ENCODE measurements at regions of chr16 and their contacts with region 1.

Region 1: DNA sequence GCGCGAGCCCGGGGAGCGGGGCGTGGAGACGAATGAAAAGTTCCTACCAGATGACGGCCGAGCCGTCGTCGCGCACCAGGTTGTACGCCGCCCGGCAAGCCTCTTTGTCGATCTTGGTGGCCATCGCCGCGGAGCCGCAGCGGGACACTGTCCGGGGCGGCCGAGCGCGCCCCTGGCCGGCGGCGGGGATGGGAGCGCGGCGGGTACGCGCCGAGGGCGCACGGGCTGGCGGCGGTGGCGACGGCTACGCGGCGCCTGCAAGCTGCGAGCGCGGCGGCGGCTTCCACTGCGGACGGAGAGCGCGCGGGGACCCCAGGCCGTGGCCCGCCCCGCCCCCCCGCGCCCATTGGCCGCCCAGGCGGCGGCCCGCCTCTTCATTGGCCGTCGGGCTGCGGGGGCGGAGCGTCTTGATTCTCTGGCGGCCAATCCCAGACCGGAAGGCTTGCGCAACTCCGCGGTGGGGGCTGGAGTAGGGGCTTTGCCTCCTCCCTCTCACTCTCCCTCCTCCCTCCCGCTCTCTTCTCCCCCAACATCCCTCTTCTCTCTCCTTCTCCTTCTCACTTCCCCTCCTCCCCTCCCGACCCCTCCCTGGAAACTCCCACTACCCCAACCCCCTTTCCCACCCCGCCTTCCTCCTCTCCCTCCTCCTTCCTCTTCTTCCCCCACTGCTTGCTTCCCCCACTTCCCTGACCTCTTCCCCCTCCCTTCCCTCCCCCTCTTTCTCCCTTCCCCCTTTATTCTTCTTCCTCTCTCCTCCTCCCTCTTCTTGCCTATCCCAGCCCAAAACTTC is at the start of gene COTL1:
- DNase-seq: peak; percentile 84 to 96 (median 91)
- ATAC-seq: peak; percentile 87 to 90 (median 88)
- H3K4me3 ChIP-seq: peak within 1 kb of the TSS; percentile 89 to 91
- H3K4me3 Mint-ChIP-seq: peak within 1 kb of the TSS; percentile 94 to 98 (median 95)
- H3K27ac ChIP-seq: no peak within 1 kb of the TSS
- H3K27ac Mint-ChIP-seq: peak within 1 kb of the TSS; percentile 81 to 86
- H3K4me1 ChIP-seq: peaks cover 28 to 47% of the 10 kb centered on the region in 2 experiments
- H3K4me1 Mint-ChIP-seq: peaks cover 48 to 54% (median 51%) of the 10 kb centered on the region in 3 donors
- H3K27me3 ChIP-seq: no peaks in the 10 kb centered on the region
- H3K27me3 Mint-ChIP-seq: no peaks in the 10 kb centered on the region
- total RNA-seq, gene COTL1: 205 to 265 (median 221) TPM

Region 2: GRCh38 chr16:84511180-84511824 is 106.7 kb before region 1 on chr16:
- CTCF ChIA-PET with region 1: interaction called, 17 to 27 read pairs
- POLR2A ChIA-PET with region 1: interaction called, 7 to 8 read pairs
- DNase-seq: peak; percentile 48 to 93 (median 81)
- ATAC-seq: peak; percentile 14 to 22 (median 19)
- H3K4me3 ChIP-seq: no peak overlapping the region
- H3K4me3 Mint-ChIP-seq: no peak overlapping the region
- H3K27ac ChIP-seq: no peak overlapping the region
- H3K27ac Mint-ChIP-seq: peak overlapping the region; percentile 78 to 89
- H3K4me1 ChIP-seq: peaks cover 49 to 86% of the 10 kb centered on the region in 2 experiments
- H3K4me1 Mint-ChIP-seq: peaks cover 65 to 72% (median 70%) of the 10 kb centered on the region in 3 donors
- H3K27me3 ChIP-seq: no peaks in the 10 kb centered on the region
- H3K27me3 Mint-ChIP-seq: no peaks in the 10 kb centered on the region

Region 3: GRCh38 chr16:84517366-84517765 is 100.6 kb before region 1 on chr16:
- CTCF ChIA-PET with region 1: interaction called, 7 to 17 read pairs
- POLR2A ChIA-PET with region 1: interaction called, 7 to 8 read pairs
- DNase-seq: no peak
- ATAC-seq: no peak
- H3K4me3 ChIP-seq: no peak overlapping the region
- H3K4me3 Mint-ChIP-seq: no peak overlapping the region
- H3K27ac ChIP-seq: no peak overlapping the region
- H3K27ac Mint-ChIP-seq: peak overlapping the region; percentile 69 to 91
- H3K4me1 ChIP-seq: peaks cover 51 to 74% of the 10 kb centered on the region in 2 experiments
- H3K4me1 Mint-ChIP-seq: peaks cover 67 to 71% (median 67%) of the 10 kb centered on the region in 3 donors
- H3K27me3 ChIP-seq: no peaks in the 10 kb centered on the region
- H3K27me3 Mint-ChIP-seq: no peaks in the 10 kb centered on the region

Region 4: GRCh38 chr16:84599521-84600202 is 18.3 kb before region 1 on chr16:
- CTCF ChIA-PET with region 1: interaction called, 4 to 17 read pairs
- POLR2A ChIA-PET with region 1: interaction called in 1 of 2 experiments, 4 read pairs
- DNase-seq: peak in 18 of 35 experiments; percentile 29 to 65 (median 40)
- ATAC-seq: peak; percentile 14 to 43 (median 36)
- H3K4me3 ChIP-seq: peak overlapping the region; percentile 48 to 66
- H3K4me3 Mint-ChIP-seq: peak overlapping the region; percentile 82 to 85 (median 84)
- H3K27ac ChIP-seq: peak overlapping the region; percentile 93
- H3K27ac Mint-ChIP-seq: peak overlapping the region; percentile 99
- H3K4me1 ChIP-seq: peaks cover 72 to 98% of the 10 kb centered on the region in 2 experiments
- H3K4me1 Mint-ChIP-seq: peaks cover 88 to 93% (median 90%) of the 10 kb centered on the region in 3 donors
- H3K27me3 ChIP-seq: peaks cover 0 to 7% of the 10 kb centered on the region in 2 experiments
- H3K27me3 Mint-ChIP-seq: no peaks in the 10 kb centered on the region

Region 5: GRCh38 chr16:84726079-84726668 is 108.2 kb after region 1 on chr16:
- CTCF ChIA-PET with region 1: interaction called, 5 to 34 read pairs
- POLR2A ChIA-PET with region 1: no interaction called
- DNase-seq: peak; percentile 57 to 90 (median 78)
- ATAC-seq: peak; percentile 68 to 81 (median 76)
- H3K4me3 ChIP-seq: no peak overlapping the region
- H3K4me3 Mint-ChIP-seq: peak overlapping the region; percentile 34 to 49 (median 48)
- H3K27ac ChIP-seq: no peak overlapping the region
- H3K27ac Mint-ChIP-seq: no peak overlapping the region
- H3K4me1 ChIP-seq: peaks cover 14 to 17% of the 10 kb centered on the region in 2 experiments
- H3K4me1 Mint-ChIP-seq: peaks cover 79 to 82% (median 81%) of the 10 kb centered on the region in 3 donors
- H3K27me3 ChIP-seq: no peaks in the 10 kb centered on the region
- H3K27me3 Mint-ChIP-seq: no peaks in the 10 kb centered on the region

Region 6: GRCh38 chr16:84738255-84739038 is 120.5 kb after region 1 on chr16:
- CTCF ChIA-PET with region 1: interaction called, 4 to 16 read pairs
- POLR2A ChIA-PET with region 1: interaction called in 1 of 2 experiments, 3 read pairs
- DNase-seq: peak; percentile 41 to 90 (median 67)
- ATAC-seq: peak; percentile 70 to 78 (median 72)
- H3K4me3 ChIP-seq: no peak overlapping the region
- H3K4me3 Mint-ChIP-seq: peak overlapping the region in 1 of 3 donors; percentile 18
- H3K27ac ChIP-seq: no peak overlapping the region
- H3K27ac Mint-ChIP-seq: peak overlapping the region in 1 of 2 donors; percentile 69
- H3K4me1 ChIP-seq: peaks cover 6 to 31% of the 10 kb centered on the region in 2 experiments
- H3K4me1 Mint-ChIP-seq: peaks cover 43 to 57% (median 52%) of the 10 kb centered on the region in 3 donors
- H3K27me3 ChIP-seq: no peaks in the 10 kb centered on the region
- H3K27me3 Mint-ChIP-seq: no peaks in the 10 kb centered on the region

Measured in T-cell (primary cell).